Posterior cingulate gyrus (tissue), 11 donors: ENCODE measurements at regions of chr1 and their contacts with region 1.

Region 1: DNA sequence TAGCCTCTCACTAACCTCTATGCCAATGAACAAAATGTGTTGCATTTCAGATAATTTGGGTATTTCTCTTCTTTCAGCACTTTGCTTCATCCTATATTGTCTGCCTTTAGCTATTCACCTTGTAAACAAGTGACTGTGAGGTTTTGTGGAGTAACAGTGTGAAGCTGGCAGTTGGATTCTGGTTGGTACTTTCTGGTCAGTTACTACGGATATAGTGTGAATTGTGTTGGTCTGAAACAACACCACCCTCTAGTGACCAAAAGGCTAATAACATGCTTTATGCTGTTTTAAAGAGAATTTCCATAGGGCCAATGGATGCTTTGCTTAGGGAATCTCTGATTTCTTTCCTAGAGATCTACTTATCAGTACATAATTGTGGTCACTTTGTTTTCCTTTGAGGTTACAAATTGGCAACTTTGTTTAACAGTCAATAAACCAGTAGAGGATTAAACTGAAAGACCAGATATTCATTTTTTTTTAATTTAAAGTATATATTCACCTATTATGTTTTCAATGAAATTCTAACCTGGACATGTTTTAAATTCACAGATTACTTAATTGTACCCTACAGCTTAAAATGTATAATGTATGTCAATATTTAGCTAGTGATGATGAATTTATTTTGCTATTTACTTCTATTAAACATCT is 2.5 kb upstream of the PTGER3 start:
- DNase-seq: no peak

Region 2: DNA sequence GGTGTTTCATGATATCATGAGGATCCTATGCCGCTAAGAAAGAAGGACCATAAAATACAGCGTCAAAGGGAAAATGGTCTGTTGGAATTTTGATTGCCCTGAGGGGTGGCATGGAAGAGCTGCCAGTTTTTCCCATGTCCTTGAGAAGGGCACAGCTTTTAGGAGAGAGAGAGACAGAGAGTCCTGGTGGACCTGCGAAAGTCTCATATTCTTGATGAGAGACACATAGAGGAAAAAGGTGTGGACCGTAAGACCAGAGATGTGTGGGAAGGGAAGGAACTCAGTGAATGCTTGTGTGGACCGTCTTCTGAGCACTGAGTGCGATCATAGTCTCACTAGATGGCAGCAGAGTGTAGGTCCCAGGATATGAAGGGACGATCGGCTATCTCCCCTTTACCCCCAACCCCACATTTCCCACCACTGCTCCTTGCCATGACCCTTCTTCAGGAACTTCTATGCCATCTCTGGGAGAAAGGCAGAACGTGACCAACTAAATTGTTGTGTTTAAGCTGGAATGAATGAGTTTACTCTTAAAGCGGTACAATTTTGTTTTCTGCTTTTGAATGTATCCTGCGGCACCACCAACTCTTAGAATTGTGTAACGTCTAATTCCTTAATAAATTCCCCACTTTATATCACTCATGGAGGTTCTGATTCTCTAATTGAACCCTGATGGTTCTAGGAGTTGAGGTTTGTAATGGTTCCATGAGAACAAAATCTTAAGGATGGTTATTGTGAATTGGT is 521.3 kb before region 1 on chr1:
- intact Hi-C with region 1: loop called (anchors 2 kb)
- DNase-seq: peak in 3 of 10 donors; percentile 13 to 73 (median 22)

Region 3: DNA sequence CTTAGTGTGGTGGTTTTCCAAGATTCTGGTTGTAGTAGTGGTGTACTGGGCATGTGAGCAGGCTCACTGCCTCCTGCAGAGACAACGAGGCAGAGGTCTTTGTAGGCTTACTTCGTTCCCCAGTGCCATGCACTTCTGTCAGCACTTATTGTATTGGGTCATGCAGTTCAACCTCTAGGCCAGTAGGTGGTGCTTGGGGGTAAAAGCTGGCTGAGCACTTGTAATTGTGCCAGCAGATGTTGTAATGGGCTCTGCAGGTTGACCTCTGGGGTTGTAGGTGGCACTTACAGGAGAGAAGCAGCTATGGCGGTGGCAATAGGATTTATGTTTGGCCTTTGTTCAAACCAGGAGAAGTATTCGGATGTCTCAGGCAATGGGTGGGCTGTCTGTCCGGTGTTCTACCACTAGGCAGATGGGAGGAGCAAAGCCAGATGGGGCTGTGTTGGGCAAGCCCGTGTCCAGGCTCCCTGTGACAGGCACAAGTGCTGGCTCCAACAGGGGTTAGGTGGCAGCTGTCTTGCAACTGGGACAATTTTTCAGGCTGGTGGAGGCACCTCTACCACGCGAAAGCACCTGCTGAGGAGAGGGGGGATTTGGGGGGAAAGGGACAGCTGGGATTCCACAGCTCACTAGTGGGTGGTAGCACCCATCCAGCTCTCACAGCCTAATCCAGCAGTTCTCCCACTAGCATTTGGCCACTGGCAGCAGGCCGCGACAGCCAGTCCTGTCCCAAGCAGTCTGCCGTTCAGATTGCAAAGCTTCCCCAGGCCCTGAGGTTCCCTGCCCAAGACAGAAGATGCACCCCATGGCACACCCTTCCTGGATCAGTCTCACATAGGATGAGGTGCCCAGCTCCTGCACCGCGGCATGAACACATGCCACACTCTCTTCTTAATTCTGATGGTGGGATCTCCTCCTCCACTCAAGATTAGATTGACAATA is 364.5 kb before region 1 on chr1:
- intact Hi-C with region 1: loop called (anchors 2 kb)
- DNase-seq: peak in 4 of 10 donors; percentile 11 to 82 (median 36)

Region 4: DNA sequence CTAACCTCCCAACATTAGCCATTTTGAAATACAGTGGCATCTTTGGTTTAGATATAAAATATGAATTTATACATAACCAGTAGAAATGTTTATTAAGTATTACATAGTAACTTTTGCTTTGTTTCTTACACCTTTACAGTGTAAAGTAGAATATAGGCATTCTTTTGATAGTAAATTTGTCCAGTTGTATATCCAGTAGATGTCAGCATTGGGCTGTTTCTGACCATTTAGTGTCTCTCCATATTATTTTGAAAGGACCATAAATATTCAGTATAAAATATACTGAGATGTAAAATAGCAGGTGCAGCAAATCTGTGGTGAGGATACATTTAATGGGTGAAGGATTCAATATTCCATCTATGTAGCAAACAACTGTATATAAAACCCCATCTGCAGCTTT is 146.6 kb after region 1 on chr1:
- intact Hi-C with region 1: no loop called
- DNase-seq: no peak